Mammary epithelial cell (primary cell): ENCODE measurements at regions of chr17 and their contacts with region 1.

Region 1: DNA sequence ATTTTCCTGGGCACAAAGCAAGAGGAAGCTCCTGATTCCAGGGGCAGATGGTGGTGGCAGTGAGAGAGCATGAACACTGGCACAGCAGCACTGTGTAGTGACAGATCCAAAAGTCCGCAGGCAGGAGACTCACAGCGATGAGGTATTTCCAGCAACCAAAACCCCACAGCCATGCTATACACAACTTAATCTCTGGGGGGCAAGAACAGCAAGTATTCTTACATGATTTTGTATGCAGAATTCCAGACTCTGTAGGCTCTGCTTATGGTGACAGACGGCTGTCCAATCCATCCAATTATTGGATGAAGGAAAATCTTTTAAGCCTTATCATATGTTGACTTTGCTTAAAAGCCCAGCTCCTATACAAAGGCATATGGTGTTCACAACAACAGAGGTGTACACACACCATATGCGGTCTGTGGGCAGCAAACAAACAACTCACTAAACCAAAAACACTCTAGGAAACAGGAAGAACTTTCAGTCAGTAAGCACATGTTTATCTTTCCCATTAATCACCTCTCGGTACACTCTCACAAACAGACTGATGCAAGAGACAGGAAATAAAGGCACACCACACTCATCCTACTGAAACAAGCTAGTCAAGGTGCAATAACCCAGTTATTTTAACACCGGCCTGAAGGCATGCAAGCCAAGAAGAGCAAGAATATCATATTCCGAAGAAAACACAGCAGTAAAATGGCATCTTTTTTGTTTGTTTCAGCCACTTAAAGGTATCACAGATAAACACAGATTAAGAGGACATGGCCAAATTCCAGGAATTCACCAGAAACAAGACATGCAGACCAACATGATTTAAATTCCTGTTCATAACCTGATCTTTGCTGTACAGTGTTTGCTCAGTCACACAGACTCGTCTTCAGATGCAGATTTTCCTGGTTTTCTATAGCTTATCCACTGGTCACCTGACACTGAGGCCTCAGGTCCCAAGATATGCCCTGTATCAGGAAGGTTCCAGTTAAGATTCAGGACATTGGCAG is 47.8 kb downstream of the ERN1 start:
- DNase-seq: peak; percentile 83
- H3K4me3 ChIP-seq: no peak overlapping the region
- H3K27ac ChIP-seq: peak overlapping the region; percentile 79
- H3K4me1 ChIP-seq: peaks cover 32% of the 10 kb centered on the region
- H3K27me3 ChIP-seq: no peaks in the 10 kb centered on the region
- CTCF ChIP-seq: no peak

Region 2: DNA sequence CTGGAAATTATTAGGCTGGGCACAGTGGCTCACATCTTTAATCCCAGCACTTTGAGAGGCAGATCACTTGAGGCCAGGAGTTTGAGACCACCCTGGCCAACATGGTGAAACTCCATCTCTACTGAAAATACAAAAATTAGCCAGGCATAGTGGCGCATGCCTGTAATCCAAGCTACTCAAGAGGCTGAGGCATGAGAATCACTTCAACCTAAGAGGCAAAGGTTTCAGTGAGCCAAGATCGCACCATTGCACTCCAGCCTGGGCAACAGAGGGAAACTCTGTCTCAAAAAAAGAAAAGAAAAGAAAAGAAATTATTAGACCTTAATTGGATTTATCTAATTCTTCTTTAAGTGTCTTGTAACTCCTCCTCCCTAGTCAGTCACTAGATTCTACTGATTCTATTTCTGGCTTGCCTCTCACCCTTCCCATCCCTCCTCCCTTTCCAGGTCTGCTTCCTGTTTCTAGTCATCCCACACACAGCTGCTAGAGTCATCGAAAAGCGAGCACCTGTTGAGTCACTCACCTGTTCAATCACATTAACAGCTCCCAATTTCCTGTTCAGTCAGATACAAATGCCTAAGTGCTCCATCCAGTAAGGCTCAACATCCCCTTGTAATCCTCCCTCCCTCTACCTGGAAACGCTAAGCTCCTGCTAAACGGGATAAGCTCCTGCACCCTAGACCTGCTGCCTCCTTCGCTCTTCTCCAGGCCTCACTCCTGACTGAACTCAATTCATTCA is 13.2 kb after region 1 on chr17:
- CTCF ChIA-PET with region 1: no interaction called
- dilution Hi-C with region 1: no loop called
- in situ Hi-C with region 1: no loop called
- intact Hi-C with region 1: loop called (anchors 1 kb)
- DNase-seq: peak; percentile 90
- H3K4me3 ChIP-seq: no peak overlapping the region
- H3K27ac ChIP-seq: peak overlapping the region; percentile 23
- H3K4me1 ChIP-seq: peaks cover 39% of the 10 kb centered on the region
- H3K27me3 ChIP-seq: no peaks in the 10 kb centered on the region
- CTCF ChIP-seq: no peak

Region 3: DNA sequence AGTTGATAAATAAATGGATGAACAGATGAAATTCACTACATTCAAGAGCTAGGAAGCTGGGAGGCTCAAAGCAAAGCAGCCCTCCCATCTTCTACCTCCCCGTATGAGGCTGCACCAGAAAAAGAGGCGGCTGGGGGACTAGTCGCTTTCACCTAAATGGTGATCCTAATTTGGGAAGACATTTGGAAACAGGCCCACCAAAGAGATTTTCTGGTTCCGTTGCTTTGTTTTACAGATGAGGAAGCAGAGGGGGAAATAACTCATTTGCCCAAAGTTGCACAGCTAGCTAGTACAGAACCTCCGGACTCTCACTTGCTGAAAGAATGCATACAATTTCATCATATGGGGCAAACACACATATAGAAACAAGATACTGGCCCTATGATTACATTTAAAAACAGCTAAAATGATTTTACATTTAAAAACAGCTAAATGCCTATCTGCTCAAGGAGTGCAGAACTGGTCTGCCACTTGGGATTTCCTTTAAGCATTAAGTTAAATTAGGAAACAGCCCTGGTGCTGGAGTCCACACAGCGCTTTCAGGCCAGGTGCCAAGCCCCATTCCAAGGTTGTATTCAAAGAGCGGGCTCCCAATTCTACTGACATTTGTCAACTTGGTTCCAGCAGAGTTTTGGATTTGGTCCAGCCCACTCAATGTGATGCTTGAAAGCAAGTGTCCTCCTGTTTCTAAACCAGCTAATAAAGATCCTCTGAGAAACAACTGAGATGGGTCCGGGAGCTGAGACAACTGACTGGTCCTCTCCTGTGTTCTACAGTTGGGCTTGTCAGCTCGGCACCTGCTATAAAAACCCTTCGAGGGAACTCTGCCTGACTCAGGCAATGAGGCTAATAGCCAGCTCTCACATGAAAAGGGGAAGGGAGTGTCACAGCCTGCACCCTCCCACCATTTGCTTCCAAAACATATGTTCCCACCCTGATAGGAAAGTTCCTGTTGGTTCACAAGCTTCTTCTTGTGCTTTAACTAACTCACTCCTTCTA is 36.2 kb after region 1 on chr17:
- CTCF ChIA-PET with region 1: no interaction called
- dilution Hi-C with region 1: no loop called
- in situ Hi-C with region 1: no loop called
- intact Hi-C with region 1: loop called (anchors 5 kb)
- DNase-seq: no peak
- H3K4me3 ChIP-seq: no peak overlapping the region
- H3K27ac ChIP-seq: no peak overlapping the region
- H3K4me1 ChIP-seq: peaks cover 24% of the 10 kb centered on the region
- H3K27me3 ChIP-seq: no peaks in the 10 kb centered on the region
- CTCF ChIP-seq: no peak